IMR-90 (cell line): ENCODE measurements at regions of chr2 and their contacts with region 1.

Region 1: GRCh38 chr2:217231212-217231611 is 371.3 kb upstream of the TNP1 start:
- DNase-seq: peak; percentile 63
- ATAC-seq: peak; percentile 63
- H3K4me3 ChIP-seq: no peak overlapping the region
- H3K27ac ChIP-seq: peak overlapping the region; percentile 93
- H3K4me1 ChIP-seq: peaks cover 12% of the 10 kb centered on the region
- H3K27me3 ChIP-seq: no peaks in the 10 kb centered on the region
- CTCF ChIP-seq: no peak
- POLR2A ChIP-seq: no peak
- RAD21 ChIP-seq: no peak

Region 2: DNA sequence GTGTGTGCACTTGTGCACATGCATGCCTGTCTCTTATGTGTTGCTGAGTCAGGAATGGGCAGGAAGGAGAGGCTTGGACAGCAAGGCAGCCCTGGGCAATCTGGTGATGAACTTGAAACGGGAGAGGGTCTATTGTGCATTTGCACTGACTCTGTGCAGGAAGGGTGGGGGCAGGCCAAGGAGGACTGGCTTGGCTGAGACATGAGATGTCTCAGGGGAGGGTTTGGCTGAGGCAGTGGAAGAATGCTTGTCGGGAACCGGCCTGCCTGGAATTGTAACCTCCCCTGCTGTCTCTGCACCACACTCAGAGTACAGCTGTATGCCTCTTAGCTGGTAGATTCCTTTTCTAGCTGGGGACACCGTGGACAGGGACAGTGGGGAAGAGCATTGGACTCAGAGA is 195.2 kb before region 1 on chr2:
- CTCF ChIA-PET with region 1: no interaction called
- POLR2A ChIA-PET with region 1: no interaction called
- dilution Hi-C with region 1: no loop called
- in situ Hi-C with region 1: no loop called
- intact Hi-C with region 1: no loop called
- DNase-seq: no peak
- ATAC-seq: peak; percentile 68
- H3K4me3 ChIP-seq: no peak overlapping the region
- H3K27ac ChIP-seq: peak overlapping the region; percentile 28; the same call in 1 of the 2 replicates
- H3K4me1 ChIP-seq: peaks cover 11% of the 10 kb centered on the region; the same call in 1 of the 2 replicates
- H3K27me3 ChIP-seq: peaks cover 5% of the 10 kb centered on the region
- CTCF ChIP-seq: no peak
- POLR2A ChIP-seq: no peak
- RAD21 ChIP-seq: no peak

Region 3: GRCh38 chr2:217075268-217076057 is 155.7 kb before region 1 on chr2:
- CTCF ChIA-PET with region 1: no interaction called
- POLR2A ChIA-PET with region 1: no interaction called
- dilution Hi-C with region 1: no loop called
- in situ Hi-C with region 1: no loop called
- intact Hi-C with region 1: no loop called
- DNase-seq: peak; percentile 69
- ATAC-seq: peak; percentile 67
- H3K4me3 ChIP-seq: no peak overlapping the region
- H3K27ac ChIP-seq: peak overlapping the region; percentile 42; the same call in 1 of the 2 replicates
- H3K4me1 ChIP-seq: peaks cover 10% of the 10 kb centered on the region
- H3K27me3 ChIP-seq: no peaks in the 10 kb centered on the region
- CTCF ChIP-seq: no peak
- POLR2A ChIP-seq: no peak
- RAD21 ChIP-seq: no peak

Region 4: GRCh38 chr2:217168496-217168895 is 62.7 kb before region 1 on chr2:
- CTCF ChIA-PET with region 1: no interaction called
- POLR2A ChIA-PET with region 1: no interaction called
- dilution Hi-C with region 1: no loop called
- in situ Hi-C with region 1: no loop called
- intact Hi-C with region 1: no loop called
- DNase-seq: no peak
- ATAC-seq: no peak
- H3K4me3 ChIP-seq: no peak overlapping the region
- H3K27ac ChIP-seq: peak overlapping the region; percentile 51
- H3K4me1 ChIP-seq: peaks cover 11% of the 10 kb centered on the region
- H3K27me3 ChIP-seq: no peaks in the 10 kb centered on the region
- CTCF ChIP-seq: no peak
- POLR2A ChIP-seq: no peak
- RAD21 ChIP-seq: no peak

Region 5: GRCh38 chr2:217360781-217361482 is 129.7 kb after region 1 on chr2:
- CTCF ChIA-PET with region 1: no interaction called
- POLR2A ChIA-PET with region 1: interaction called, 15 read pairs
- dilution Hi-C with region 1: no loop called
- in situ Hi-C with region 1: no loop called
- intact Hi-C with region 1: no loop called
- DNase-seq: peak; percentile 89
- ATAC-seq: peak; percentile 71
- H3K4me3 ChIP-seq: no peak overlapping the region
- H3K27ac ChIP-seq: peak overlapping the region; percentile 96
- H3K4me1 ChIP-seq: peaks cover 37% of the 10 kb centered on the region
- H3K27me3 ChIP-seq: no peaks in the 10 kb centered on the region
- CTCF ChIP-seq: peak; percentile 5; the same call in 1 of the 2 replicates
- POLR2A ChIP-seq: no peak
- RAD21 ChIP-seq: no peak

Region 6: DNA sequence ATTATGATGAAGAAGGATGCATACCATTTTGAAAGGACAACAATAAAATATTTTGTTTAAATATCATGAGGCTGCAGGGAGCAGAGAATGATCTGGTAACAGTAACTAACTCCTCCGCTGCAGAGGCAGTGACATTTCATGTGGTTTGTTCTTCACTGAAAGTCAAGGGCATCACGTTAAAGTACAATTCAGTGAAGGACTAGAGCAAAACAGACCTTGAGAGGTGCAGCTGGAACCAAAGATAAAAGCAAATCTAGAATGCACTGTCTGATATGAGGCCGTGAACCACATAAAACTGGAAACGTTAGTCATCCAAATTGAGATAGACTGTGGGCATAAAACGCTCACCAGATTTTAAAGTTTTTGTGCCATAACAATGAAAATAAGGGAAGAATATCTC is 151.6 kb after region 1 on chr2:
- CTCF ChIA-PET with region 1: no interaction called
- POLR2A ChIA-PET with region 1: no interaction called
- dilution Hi-C with region 1: no loop called
- in situ Hi-C with region 1: no loop called
- intact Hi-C with region 1: loop called (anchors 5 kb)
- DNase-seq: no peak
- ATAC-seq: no peak
- H3K4me3 ChIP-seq: no peak overlapping the region
- H3K27ac ChIP-seq: peak overlapping the region; percentile 79
- H3K4me1 ChIP-seq: peaks cover 20% of the 10 kb centered on the region
- H3K27me3 ChIP-seq: no peaks in the 10 kb centered on the region
- CTCF ChIP-seq: no peak
- POLR2A ChIP-seq: no peak
- RAD21 ChIP-seq: no peak

Region 7: DNA sequence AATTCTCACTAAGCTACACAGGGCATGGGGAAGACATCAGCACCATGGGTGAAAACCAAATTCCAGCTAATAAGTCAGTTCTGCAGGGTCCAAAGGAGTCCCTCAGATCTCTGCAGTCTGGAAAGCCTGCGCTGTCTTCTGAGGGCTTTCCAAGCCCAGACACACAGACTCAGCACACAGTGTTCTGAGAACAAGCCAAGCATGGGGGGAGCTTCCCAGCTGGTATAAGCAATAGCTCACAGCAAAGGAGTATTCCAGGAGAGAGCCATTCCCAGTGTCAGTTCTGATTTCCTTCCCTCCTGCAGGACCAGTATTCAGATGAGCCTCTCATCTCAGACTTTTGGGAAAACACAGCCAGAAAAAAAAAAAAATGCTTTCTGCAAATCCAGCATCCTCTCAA is 400.8 kb after region 1 on chr2:
- CTCF ChIA-PET with region 1: no interaction called
- POLR2A ChIA-PET with region 1: no interaction called
- dilution Hi-C with region 1: no loop called
- in situ Hi-C with region 1: no loop called
- intact Hi-C with region 1: no loop called
- DNase-seq: no peak
- ATAC-seq: no peak
- H3K4me3 ChIP-seq: no peak overlapping the region
- H3K27ac ChIP-seq: no peak overlapping the region
- H3K4me1 ChIP-seq: peaks cover 5% of the 10 kb centered on the region; the same call in 1 of the 2 replicates
- H3K27me3 ChIP-seq: peaks cover 9% of the 10 kb centered on the region; the same call in 1 of the 2 replicates
- CTCF ChIP-seq: no peak
- POLR2A ChIP-seq: no peak
- RAD21 ChIP-seq: no peak